Activated B cell treated with CpG ODN at 0.5 μM for 24 hours (primary cell): ENCODE measurements at regions of chr7 and their contacts with region 1.

Region 1: GRCh38 chr7:151782598-151783448 is 94.1 kb downstream of the PRKAG2 start:
- DNase-seq: peak; percentile 77
- ATAC-seq: peak; percentile 95
- H3K4me3 Mint-ChIP-seq: peak overlapping the region; percentile 74
- H3K27ac Mint-ChIP-seq: no peak overlapping the region
- H3K4me1 Mint-ChIP-seq: peaks cover 7% of the 10 kb centered on the region
- H3K27me3 Mint-ChIP-seq: no peaks in the 10 kb centered on the region
- CTCF ChIP-seq: peak; percentile 63

Region 2: DNA sequence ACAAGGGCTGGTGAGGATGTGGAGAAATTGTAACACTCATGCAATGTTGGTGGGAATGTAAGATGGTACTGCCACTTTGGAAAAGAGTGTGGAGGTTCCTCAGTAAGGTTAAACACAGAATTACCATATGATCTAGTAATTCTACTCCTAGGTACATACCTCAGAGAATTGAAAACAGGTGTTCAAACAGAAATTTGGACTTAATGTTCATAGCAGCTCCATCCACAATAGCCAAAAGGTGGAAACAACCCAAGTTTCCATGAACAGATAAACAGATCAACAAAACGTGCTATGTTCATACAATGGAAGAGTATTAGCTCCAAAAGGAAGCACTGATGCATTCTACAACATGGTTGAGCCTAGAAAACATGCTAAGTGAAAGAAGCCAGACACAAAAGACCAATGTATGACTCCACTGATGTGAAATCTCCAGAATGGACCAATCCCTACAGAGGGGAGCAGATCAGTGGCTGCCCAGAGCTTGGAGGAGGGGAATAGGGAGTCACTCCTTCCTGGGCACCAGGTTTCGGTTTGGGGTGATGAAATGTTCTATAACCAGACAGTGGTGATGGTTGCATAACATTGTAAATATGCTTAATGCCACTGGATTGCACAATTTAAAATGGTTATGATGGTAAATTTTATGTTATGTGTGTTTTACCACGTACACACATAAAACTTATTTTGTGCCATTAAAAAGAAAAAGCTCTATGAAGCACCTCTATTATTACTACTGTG is 367.3 kb before region 1 on chr7:
- CTCF ChIA-PET with region 1: no interaction called
- POLR2A ChIA-PET with region 1: no interaction called
- intact Hi-C with region 1: no loop called
- DNase-seq: no peak
- ATAC-seq: no peak
- H3K4me3 Mint-ChIP-seq: no peak overlapping the region
- H3K27ac Mint-ChIP-seq: no peak overlapping the region
- H3K4me1 Mint-ChIP-seq: peaks cover 13% of the 10 kb centered on the region
- H3K27me3 Mint-ChIP-seq: peaks cover 48% of the 10 kb centered on the region
- CTCF ChIP-seq: no peak

Region 3: DNA sequence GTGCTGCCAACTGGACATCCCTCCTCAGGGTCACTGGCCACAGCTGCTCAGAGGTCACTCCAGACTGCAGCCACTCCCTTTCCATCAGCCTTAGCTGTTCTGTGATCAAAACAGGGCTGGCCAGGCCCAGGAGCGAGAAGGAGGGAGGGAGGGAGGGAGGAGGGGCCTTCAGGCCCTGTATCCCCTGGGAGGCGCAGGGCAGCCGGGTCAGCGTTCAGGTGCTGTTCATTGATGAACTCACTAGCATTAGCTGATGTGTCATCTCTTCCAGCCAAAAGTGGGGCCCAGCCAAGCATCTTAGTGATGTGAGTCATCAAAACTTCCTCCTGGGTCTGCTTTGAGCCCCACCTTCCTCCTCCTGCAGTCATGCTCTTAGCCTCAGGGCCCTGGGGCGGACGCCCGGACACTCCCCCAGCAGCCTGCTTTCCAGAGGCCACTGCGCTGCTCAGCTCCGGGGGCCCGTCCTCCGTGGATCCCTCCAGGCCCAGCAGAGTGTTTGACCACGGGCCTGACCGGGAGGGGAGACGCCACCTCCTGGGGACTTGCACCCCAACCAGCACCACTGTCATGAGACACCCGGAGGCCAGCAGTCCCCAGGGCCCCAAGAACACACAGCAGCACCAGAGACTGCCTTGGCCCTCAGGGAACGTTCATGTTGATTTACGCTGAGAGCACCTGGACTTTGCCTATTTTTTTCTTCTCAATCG is 55.1 kb before region 1 on chr7:
- CTCF ChIA-PET with region 1: no interaction called
- POLR2A ChIA-PET with region 1: no interaction called
- intact Hi-C with region 1: no loop called
- DNase-seq: peak; percentile 44
- ATAC-seq: peak; percentile 83
- H3K4me3 Mint-ChIP-seq: peak overlapping the region; percentile 11
- H3K27ac Mint-ChIP-seq: no peak overlapping the region
- H3K4me1 Mint-ChIP-seq: peaks cover 37% of the 10 kb centered on the region
- H3K27me3 Mint-ChIP-seq: no peaks in the 10 kb centered on the region
- CTCF ChIP-seq: no peak

Region 4: DNA sequence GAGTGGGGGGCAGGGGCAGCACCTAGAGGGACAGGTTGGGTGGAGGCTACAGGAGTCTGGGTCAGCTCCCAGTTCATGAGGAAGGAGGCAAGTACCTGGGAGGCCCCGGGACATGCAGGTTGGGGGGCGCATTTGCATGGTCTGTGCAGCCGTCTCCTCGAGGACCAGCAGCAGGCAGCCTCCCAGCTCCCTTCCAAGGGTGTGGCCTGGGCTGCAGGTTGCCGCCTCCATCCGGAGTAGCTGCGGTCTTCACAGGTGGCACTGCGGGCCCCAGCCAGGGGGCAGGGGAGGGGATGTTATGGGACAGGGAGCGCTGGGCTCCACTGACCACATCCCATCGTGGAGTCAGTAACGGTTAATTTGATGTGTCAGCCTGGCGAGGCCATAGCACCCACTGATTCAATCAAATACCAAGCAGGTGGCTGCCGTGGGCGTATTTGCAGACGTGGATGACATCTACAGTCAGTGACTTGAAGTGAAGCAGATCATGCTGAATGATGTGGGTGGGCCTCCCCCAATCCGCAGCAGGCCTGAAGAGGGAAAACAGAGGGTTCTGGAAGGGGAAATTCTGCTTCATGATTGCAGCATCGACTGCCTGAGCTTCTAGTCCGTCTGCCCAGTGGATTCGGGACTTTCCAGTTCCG is 12.5 kb after region 1 on chr7:
- CTCF ChIA-PET with region 1: interaction called, 19 read pairs
- POLR2A ChIA-PET with region 1: no interaction called
- intact Hi-C with region 1: loop called (anchors 1 kb)
- DNase-seq: no peak
- ATAC-seq: peak; percentile 80
- H3K4me3 Mint-ChIP-seq: no peak overlapping the region
- H3K27ac Mint-ChIP-seq: peak overlapping the region; percentile 62
- H3K4me1 Mint-ChIP-seq: peaks cover 28% of the 10 kb centered on the region
- H3K27me3 Mint-ChIP-seq: no peaks in the 10 kb centered on the region
- CTCF ChIP-seq: no peak

Region 5: DNA sequence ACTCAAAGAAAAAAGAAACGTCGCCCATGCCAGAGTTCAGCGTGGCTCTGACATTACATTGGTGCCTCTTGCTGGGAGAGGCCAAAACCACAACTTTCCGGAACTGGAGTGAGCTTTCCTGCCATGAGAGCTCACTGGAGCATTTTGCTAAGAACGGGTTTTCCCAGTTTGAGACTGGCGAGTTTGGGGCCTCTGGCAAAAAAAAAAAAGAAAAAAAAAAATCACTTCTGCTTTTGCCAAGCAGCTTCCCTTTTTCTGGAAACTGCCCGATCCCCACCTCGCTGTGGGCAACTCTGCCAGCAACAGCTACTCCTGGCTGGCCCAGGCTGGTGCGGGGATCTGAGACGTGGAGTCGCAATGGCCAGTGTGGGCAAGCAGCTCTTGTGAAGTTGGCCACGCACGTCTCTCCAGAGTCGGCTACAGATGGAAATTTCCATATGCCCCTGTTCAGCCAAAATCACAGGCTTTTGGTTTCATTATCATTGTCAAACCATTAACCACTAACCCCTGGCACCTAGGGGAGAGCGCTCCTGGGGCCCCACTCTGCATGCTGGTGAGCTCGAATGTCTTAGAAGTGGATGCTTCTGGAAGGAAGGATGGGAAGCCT is 68.4 kb after region 1 on chr7:
- CTCF ChIA-PET with region 1: interaction called, 7 read pairs
- POLR2A ChIA-PET with region 1: no interaction called
- intact Hi-C with region 1: loop called (anchors 1 kb)
- DNase-seq: peak; percentile 42
- ATAC-seq: peak; percentile 79
- H3K4me3 Mint-ChIP-seq: peak overlapping the region; percentile 81
- H3K27ac Mint-ChIP-seq: peak overlapping the region; percentile 85
- H3K4me1 Mint-ChIP-seq: peaks cover 32% of the 10 kb centered on the region
- H3K27me3 Mint-ChIP-seq: no peaks in the 10 kb centered on the region
- CTCF ChIP-seq: no peak

Region 6: DNA sequence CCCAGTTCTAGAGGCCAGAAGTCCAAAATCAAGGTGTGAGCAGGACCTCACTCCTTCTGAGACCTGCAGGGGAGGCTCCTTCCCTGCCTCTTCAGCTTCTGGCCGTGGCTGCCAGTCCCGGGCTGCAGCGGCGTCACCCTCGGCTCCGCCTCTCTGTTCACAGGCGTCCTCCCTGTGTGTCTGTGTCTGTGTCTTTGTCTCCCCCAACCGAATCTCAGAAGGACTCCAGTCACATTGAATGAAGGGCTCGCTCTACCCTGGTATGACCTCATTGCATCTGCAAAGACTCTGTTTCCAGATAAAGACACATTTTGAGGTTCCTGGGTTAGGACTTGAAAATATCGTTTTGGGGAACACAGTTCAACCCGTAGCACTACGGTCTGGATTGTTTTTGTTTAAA is 209.6 kb after region 1 on chr7:
- CTCF ChIA-PET with region 1: no interaction called
- POLR2A ChIA-PET with region 1: no interaction called
- intact Hi-C with region 1: loop called (anchors 1 kb)
- DNase-seq: no peak
- ATAC-seq: peak; percentile 77
- H3K4me3 Mint-ChIP-seq: no peak overlapping the region
- H3K27ac Mint-ChIP-seq: no peak overlapping the region
- H3K4me1 Mint-ChIP-seq: no peaks in the 10 kb centered on the region
- H3K27me3 Mint-ChIP-seq: peaks cover 28% of the 10 kb centered on the region
- CTCF ChIP-seq: no peak

Region 7: GRCh38 chr7:152145853-152146466 is 363.1 kb after region 1 on chr7:
- CTCF ChIA-PET with region 1: no interaction called
- POLR2A ChIA-PET with region 1: no interaction called
- intact Hi-C with region 1: loop called (anchors 2 kb)
- DNase-seq: no peak
- ATAC-seq: peak; percentile 40
- H3K4me3 Mint-ChIP-seq: no peak overlapping the region
- H3K27ac Mint-ChIP-seq: no peak overlapping the region
- H3K4me1 Mint-ChIP-seq: peaks cover 3% of the 10 kb centered on the region
- H3K27me3 Mint-ChIP-seq: no peaks in the 10 kb centered on the region
- CTCF ChIP-seq: no peak